Common myeloid progenitor, CD34-positive (primary cell): ENCODE measurements at regions of chr18 and their contacts with region 1.

Region 1: DNA sequence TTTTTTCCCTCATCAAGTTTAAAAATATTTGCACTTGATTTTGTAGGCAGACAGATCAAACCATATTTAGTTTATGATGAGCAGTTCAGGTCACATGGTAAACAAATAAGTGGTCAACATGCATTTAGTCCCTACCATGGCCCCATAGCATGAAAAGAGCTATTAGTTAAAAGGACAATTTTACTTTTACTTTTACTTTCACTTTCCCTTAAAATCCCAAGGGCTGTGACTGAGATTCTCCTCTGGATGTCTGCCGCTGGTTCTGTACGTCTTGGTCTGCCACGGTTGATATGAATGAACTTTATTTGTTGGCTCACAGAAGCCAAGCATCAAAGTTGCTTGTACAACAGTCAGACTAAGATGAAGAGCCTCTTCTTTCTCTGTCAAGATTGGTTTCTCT is 626.2 kb upstream of the CDH7 start:
- DNase-seq: peak; percentile 9 to 45 (median 25)
- H3K4me3 ChIP-seq: peak overlapping the region in 3 of 7 experiments; percentile 46 to 65 (median 60)
- H3K27ac ChIP-seq: no peak overlapping the region
- H3K4me1 ChIP-seq: peaks cover 0 to 3% (median 0%) of the 10 kb centered on the region in 4 experiments
- H3K27me3 ChIP-seq: no peaks in the 10 kb centered on the region

Region 2: DNA sequence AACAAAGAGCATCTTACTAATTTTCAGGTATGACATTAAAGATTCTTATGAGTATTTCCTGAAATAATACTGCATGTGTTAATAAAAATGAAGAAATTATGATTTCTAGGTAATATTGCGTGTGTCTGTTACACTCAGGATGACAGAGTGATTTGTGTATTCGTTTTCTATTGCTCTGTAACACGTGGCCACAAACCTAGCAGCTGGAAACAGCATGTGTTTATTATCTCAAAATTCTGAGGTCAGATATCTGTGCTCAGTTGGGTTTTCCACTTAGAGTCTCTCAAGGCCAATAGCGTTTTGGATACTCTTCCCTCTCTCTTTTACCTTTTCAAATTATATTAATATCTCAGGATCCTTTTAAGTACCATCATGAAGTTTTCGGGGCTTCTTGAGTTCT is 41.7 kb before region 1 on chr18:
- CTCF ChIA-PET with region 1: no interaction called
- POLR2A ChIA-PET with region 1: no interaction called
- DNase-seq: no peak
- H3K4me3 ChIP-seq: no peak overlapping the region
- H3K27ac ChIP-seq: no peak overlapping the region
- H3K4me1 ChIP-seq: no peaks in the 10 kb centered on the region
- H3K27me3 ChIP-seq: no peaks in the 10 kb centered on the region

Region 3: GRCh38 chr18:65103864-65104263 is 20.8 kb before region 1 on chr18:
- CTCF ChIA-PET with region 1: no interaction called
- POLR2A ChIA-PET with region 1: no interaction called
- DNase-seq: no peak
- H3K4me3 ChIP-seq: no peak overlapping the region
- H3K27ac ChIP-seq: no peak overlapping the region
- H3K4me1 ChIP-seq: no peaks in the 10 kb centered on the region
- H3K27me3 ChIP-seq: no peaks in the 10 kb centered on the region

Region 4: GRCh38 chr18:65175681-65176080 is 51.0 kb after region 1 on chr18:
- CTCF ChIA-PET with region 1: no interaction called
- POLR2A ChIA-PET with region 1: no interaction called
- DNase-seq: no peak
- H3K4me3 ChIP-seq: no peak overlapping the region
- H3K27ac ChIP-seq: no peak overlapping the region
- H3K4me1 ChIP-seq: no peaks in the 10 kb centered on the region
- H3K27me3 ChIP-seq: no peaks in the 10 kb centered on the region

Region 5: GRCh38 chr18:65221736-65222135 is 97.1 kb after region 1 on chr18:
- CTCF ChIA-PET with region 1: no interaction called
- POLR2A ChIA-PET with region 1: no interaction called
- DNase-seq: no peak
- H3K4me3 ChIP-seq: no peak overlapping the region
- H3K27ac ChIP-seq: no peak overlapping the region
- H3K4me1 ChIP-seq: no peaks in the 10 kb centered on the region
- H3K27me3 ChIP-seq: no peaks in the 10 kb centered on the region

Region 6: GRCh38 chr18:65365245-65365980 is 240.8 kb after region 1 on chr18:
- CTCF ChIA-PET with region 1: no interaction called
- POLR2A ChIA-PET with region 1: interaction called, 10 read pairs
- DNase-seq: peak in 2 of 3 donors; percentile 36 to 54
- H3K4me3 ChIP-seq: no peak overlapping the region
- H3K27ac ChIP-seq: no peak overlapping the region
- H3K4me1 ChIP-seq: peaks cover 3 to 29% (median 12%) of the 10 kb centered on the region in 4 experiments
- H3K27me3 ChIP-seq: no peaks in the 10 kb centered on the region